HepG2 (cell line): ENCODE measurements at regions of chr16 and their contacts with region 1.

Region 1: GRCh38 chr16:57667526-57668258 is 414 bp upstream of the ADGRG3 start:
- DNase-seq: peak; percentile 91
- ATAC-seq: peak; percentile 93
- H3K4me3 ChIP-seq: peak overlapping the region in 2 of 3 experiments; percentile 50 to 60; a peak in 4 of 6 replicates
- H3K27ac ChIP-seq: peak overlapping the region; percentile 79
- H3K4me1 ChIP-seq: peaks cover 69% of the 10 kb centered on the region
- H3K27me3 ChIP-seq: no peaks in the 10 kb centered on the region
- CTCF ChIP-seq: peak; percentile 79
- EP300 ChIP-seq: peak; percentile 79 to 87
- POLR2A ChIP-seq: peak; percentile 75 to 77
- RAD21 ChIP-seq: peak; percentile 42

Region 2: GRCh38 chr16:57689762-57690558 is 22.3 kb after region 1 on chr16:
- CTCF ChIA-PET with region 1: interaction called, 3 read pairs
- POLR2A ChIA-PET with region 1: interaction called, 12 read pairs
- in situ Hi-C with region 1: no loop called
- intact Hi-C with region 1: loop called (anchors 1 kb)
- DNase-seq: no peak
- ATAC-seq: no peak
- H3K4me3 ChIP-seq: no peak overlapping the region
- H3K27ac ChIP-seq: no peak overlapping the region
- H3K4me1 ChIP-seq: peaks cover 73% of the 10 kb centered on the region
- H3K27me3 ChIP-seq: no peaks in the 10 kb centered on the region
- CTCF ChIP-seq: no peak
- EP300 ChIP-seq: no peak
- POLR2A ChIP-seq: no peak
- RAD21 ChIP-seq: no peak

Region 3: GRCh38 chr16:57694725-57695679 is 27.3 kb after region 1 on chr16 and contains the start of gene DRC7:
- CTCF ChIA-PET with region 1: interaction called, 3 read pairs
- POLR2A ChIA-PET with region 1: interaction called, 11 read pairs
- in situ Hi-C with region 1: no loop called
- intact Hi-C with region 1: loop called (anchors 1 kb)
- DNase-seq: peak; percentile 86
- ATAC-seq: peak; percentile 92
- H3K4me3 ChIP-seq: peak within 1 kb of the TSS; percentile 30 to 54 (median 42)
- H3K27ac ChIP-seq: peak within 1 kb of the TSS; percentile 59
- H3K4me1 ChIP-seq: peaks cover 81% of the 10 kb centered on the region
- H3K27me3 ChIP-seq: no peaks in the 10 kb centered on the region
- CTCF ChIP-seq: no peak
- EP300 ChIP-seq: no peak
- POLR2A ChIP-seq: no peak
- RAD21 ChIP-seq: peak; percentile 20; the same call in 1 of the 2 replicates
- total RNA-seq, gene DRC7: 2.7 and 3.4 TPM in 2 replicates

Region 4: GRCh38 chr16:57700781-57701551 is 33.3 kb after region 1 on chr16:
- CTCF ChIA-PET with region 1: no interaction called
- POLR2A ChIA-PET with region 1: interaction called, 35 read pairs
- in situ Hi-C with region 1: no loop called
- intact Hi-C with region 1: no loop called
- DNase-seq: peak; percentile 81
- ATAC-seq: peak; percentile 58
- H3K4me3 ChIP-seq: peak overlapping the region in 2 of 3 experiments; percentile 11 to 49; a peak in 3 of 6 replicates
- H3K27ac ChIP-seq: peak overlapping the region; percentile 72
- H3K4me1 ChIP-seq: peaks cover 87% of the 10 kb centered on the region
- H3K27me3 ChIP-seq: no peaks in the 10 kb centered on the region
- CTCF ChIP-seq: no peak
- EP300 ChIP-seq: no peak
- POLR2A ChIP-seq: no peak
- RAD21 ChIP-seq: no peak

Region 5: GRCh38 chr16:57743458-57743857 is 75.8 kb after region 1 on chr16:
- CTCF ChIA-PET with region 1: no interaction called
- POLR2A ChIA-PET with region 1: no interaction called
- in situ Hi-C with region 1: no loop called
- intact Hi-C with region 1: no loop called
- DNase-seq: no peak
- ATAC-seq: no peak
- H3K4me3 ChIP-seq: no peak overlapping the region
- H3K27ac ChIP-seq: no peak overlapping the region
- H3K4me1 ChIP-seq: no peaks in the 10 kb centered on the region
- H3K27me3 ChIP-seq: no peaks in the 10 kb centered on the region
- CTCF ChIP-seq: no peak
- EP300 ChIP-seq: no peak
- POLR2A ChIP-seq: no peak
- RAD21 ChIP-seq: no peak